ENCODE measurements at regions of chr1 and their contacts with region 1.

Region 1: GRCh38 chr1:53889304-53890298 is at the start of gene YIPF1:
- DNase-seq: peak; percentile 91 to 95 (median 93)
- ATAC-seq: peak; percentile 98 to 100 (median 100)
- H3K4me3 ChIP-seq: peak within 1 kb of the TSS; percentile 44 to 100 (median 81)
- H3K27ac ChIP-seq: peak within 1 kb of the TSS in 11 of 12 donors; percentile 19 to 92 (median 72)
- H3K4me1 ChIP-seq: peaks cover 0 to 45% (median 8%) of the 10 kb centered on the region in 12 donors
- H3K27me3 ChIP-seq: no peaks in the 10 kb centered on the region
- CTCF ChIP-seq: no peak
- POLR2A ChIP-seq: peak in 1 of 2 donors; percentile 67
- total RNA-seq, gene YIPF1: 11.2 to 23.5 (median 14.4) TPM

Region 2: GRCh38 chr1:54052934-54053744 is 163.5 kb after region 1 on chr1 and contains the starts of genes TCEANC2 and TMEM59:
- intact Hi-C with region 1: loop called in 4 of 10 experiments (anchors 5 to 10 kb)
- DNase-seq: peak; percentile 98 to 99 (median 98)
- ATAC-seq: peak; percentile 96 to 98 (median 98)
- H3K4me3 ChIP-seq: peak within 1 kb of the TSS; percentile 88 to 99 (median 95)
- H3K27ac ChIP-seq: peak within 1 kb of the TSS; percentile 88 to 98 (median 94)
- H3K4me1 ChIP-seq: peaks cover 0 to 51% (median 41%) of the 10 kb centered on the region in 12 donors
- H3K27me3 ChIP-seq: no peaks in the 10 kb centered on the region
- CTCF ChIP-seq: peak in 1 of 12 donors; percentile 7
- POLR2A ChIP-seq: peak in 1 of 2 donors; percentile 63
- total RNA-seq, gene TCEANC2: 3.0 to 6.6 (median 4.6) TPM
- total RNA-seq, gene TMEM59: 193 to 496 (median 352) TPM

Measured in heart left ventricle (tissue), 16 donors.